SK-N-SH (cell line): ENCODE measurements at regions of chr10 and their contacts with region 1.

Region 1: DNA sequence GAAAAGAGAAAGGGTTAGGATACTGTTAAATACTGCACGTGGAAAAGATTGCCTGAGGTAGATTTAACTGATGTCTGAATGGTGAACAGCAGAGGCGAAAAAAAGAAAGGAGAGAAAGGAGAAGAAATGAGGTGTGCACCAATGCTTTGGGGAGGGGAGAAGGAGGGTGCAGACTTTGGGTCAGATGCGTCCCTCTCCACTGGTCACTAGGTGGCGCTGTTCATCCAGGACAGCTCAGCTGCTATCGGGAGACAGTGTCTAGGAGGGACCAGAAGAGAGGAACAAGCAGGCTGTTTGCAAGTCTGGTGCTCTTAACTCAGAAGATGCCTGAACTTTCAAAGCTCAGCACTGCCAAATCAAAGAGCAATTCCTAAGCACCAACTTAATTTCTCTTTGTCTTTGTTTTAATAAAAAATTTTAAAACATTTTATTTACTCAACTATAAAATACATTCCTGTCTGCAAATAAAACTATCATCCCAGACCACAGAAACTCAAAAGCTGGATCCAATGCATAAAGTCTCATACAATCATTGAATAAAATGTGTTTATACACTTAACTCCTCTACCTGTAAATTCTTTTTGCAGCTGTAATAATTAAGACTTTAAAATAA is 83.9 kb upstream of the PDLIM1 start:
- DNase-seq: peak; percentile 73
- H3K4me3 ChIP-seq: peak overlapping the region in 1 of 2 experiments; percentile 31; a peak in 1 of 4 replicates
- H3K27ac ChIP-seq: no peak overlapping the region
- H3K4me1 ChIP-seq: peaks cover 0 to 8% of the 10 kb centered on the region in 2 experiments; a peak in 2 of 4 replicates
- H3K27me3 ChIP-seq: peaks cover 10% of the 10 kb centered on the region; the same call in 1 of the 2 replicates
- CTCF ChIP-seq: peak; percentile 72
- EP300 ChIP-seq: no peak
- RAD21 ChIP-seq: peak; percentile 96

Region 2: DNA sequence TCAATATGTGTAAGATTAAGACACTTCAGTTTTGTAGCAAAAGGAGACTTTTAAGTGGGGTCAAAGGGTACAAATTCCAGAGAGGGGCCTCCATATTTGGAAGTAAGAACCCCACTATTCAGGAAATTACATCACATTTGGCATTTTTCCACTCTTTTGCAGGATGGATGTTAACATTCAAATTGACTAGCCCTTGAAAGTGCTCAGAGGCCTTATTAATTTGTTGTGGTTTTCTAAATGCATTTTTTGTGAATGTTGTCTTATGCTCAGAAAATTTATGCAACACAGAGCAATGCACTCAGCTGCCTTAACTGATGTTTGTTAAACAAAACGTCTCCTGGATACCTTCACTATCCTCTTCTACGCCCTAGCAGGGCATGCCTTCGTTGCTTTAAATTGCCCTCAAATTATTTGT is 33.0 kb before region 1 on chr10:
- CTCF ChIA-PET with region 1: interaction called, 12 read pairs
- POLR2A ChIA-PET with region 1: no interaction called
- DNase-seq: no peak
- H3K4me3 ChIP-seq: no peak overlapping the region
- H3K27ac ChIP-seq: no peak overlapping the region
- H3K4me1 ChIP-seq: no peaks in the 10 kb centered on the region; a peak in 1 of 4 replicates
- H3K27me3 ChIP-seq: no peaks in the 10 kb centered on the region
- CTCF ChIP-seq: no peak
- EP300 ChIP-seq: 0 out of 4 replicates have a peak, but pooled peaks of 1 of the 2 experiments have one; percentile 19
- RAD21 ChIP-seq: no peak

Region 3: GRCh38 chr10:95406651-95407280 is 32.1 kb after region 1 on chr10:
- CTCF ChIA-PET with region 1: interaction called, 35 read pairs
- POLR2A ChIA-PET with region 1: no interaction called
- DNase-seq: no peak
- H3K4me3 ChIP-seq: no peak overlapping the region
- H3K27ac ChIP-seq: no peak overlapping the region
- H3K4me1 ChIP-seq: peaks cover 0 to 7% of the 10 kb centered on the region in 2 experiments; a peak in 1 of 4 replicates
- H3K27me3 ChIP-seq: no peaks in the 10 kb centered on the region
- CTCF ChIP-seq: no peak
- EP300 ChIP-seq: no peak
- RAD21 ChIP-seq: no peak

Region 4: DNA sequence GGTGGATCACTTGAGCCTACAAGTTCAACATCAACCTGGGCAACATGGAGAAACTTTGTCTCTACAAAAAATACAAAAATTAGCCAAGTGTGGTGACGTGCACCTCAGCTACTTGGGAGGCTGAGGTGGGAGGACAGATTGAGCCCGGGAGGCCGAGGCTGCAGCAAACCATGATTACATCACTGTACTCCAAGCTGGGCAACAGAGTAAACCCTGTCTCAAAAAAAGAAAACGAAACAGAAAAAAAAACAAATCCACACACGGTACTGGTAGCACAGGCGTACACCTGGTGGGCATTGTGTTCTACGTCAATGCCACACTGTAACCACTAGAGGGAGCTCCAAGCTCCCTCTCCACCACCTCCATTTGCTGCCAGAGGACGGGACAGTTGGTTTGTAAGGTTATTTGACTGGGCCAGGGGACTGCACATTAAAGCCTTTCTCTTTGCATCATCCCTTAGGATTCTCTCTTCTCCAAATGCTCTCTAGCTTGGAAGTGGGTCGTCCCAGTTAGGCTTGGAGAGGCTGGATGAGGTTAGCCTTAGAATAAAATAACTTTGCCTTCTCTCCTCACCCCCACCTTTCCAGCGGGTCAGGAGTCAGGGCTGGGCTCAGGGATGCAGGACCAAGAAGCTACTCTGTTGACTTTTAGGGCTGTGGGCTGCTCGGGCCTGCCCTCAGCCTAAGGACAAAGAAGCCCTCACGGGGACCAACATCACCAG is 55.7 kb after region 1 on chr10:
- CTCF ChIA-PET with region 1: interaction called, 88 read pairs
- POLR2A ChIA-PET with region 1: no interaction called
- DNase-seq: peak; percentile 81
- H3K4me3 ChIP-seq: no peak overlapping the region; a peak in 1 of 4 replicates
- H3K27ac ChIP-seq: no peak overlapping the region
- H3K4me1 ChIP-seq: peaks cover 0 to 12% of the 10 kb centered on the region in 2 experiments; a peak in 2 of 4 replicates
- H3K27me3 ChIP-seq: no peaks in the 10 kb centered on the region
- CTCF ChIP-seq: peak; percentile 97
- EP300 ChIP-seq: no peak
- RAD21 ChIP-seq: peak; percentile 95

Region 5: DNA sequence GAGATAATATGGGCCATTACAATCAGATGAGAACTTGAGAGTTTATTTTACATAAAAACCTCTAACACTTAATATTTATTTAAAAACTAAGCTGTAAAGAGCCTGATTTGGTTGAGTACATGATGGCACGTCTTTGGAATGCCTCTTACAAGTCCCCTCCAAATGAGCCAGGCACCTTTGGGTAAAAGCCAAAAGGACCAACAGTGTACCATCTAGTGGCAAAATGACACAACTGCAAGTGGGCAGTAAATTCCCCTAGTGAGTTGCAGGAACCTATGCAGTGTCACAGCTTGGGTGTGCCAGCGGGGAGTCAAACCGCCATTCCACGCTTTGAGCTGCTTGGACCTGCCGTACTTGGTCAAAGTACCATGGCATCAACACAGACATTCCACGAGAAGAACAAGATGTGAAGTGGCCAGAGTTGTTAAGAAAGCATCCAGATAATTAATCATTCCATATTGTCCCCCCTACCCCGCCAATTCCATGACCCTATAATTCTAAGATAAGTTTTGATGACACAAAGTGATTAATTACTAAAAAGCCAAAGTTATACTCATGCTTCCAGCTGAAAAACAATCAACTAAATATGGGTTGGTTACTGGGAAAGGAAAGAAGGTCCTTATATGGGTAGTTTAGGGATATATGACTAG is 71.3 kb after region 1 on chr10:
- CTCF ChIA-PET with region 1: interaction called, 30 read pairs
- POLR2A ChIA-PET with region 1: no interaction called
- DNase-seq: peak; percentile 67
- H3K4me3 ChIP-seq: no peak overlapping the region
- H3K27ac ChIP-seq: 0 out of 4 replicates have a peak overlapping the region, but pooled peaks of 1 of the 2 experiments have one; percentile 16
- H3K4me1 ChIP-seq: peaks cover 4% of the 10 kb centered on the region in 2 experiments; a peak in 2 of 4 replicates
- H3K27me3 ChIP-seq: no peaks in the 10 kb centered on the region
- CTCF ChIP-seq: peak; percentile 81
- EP300 ChIP-seq: no peak
- RAD21 ChIP-seq: peak; percentile 64

Region 6: GRCh38 chr10:95613330-95613729 is 238.6 kb after region 1 on chr10:
- CTCF ChIA-PET with region 1: interaction called, 214 read pairs
- POLR2A ChIA-PET with region 1: no interaction called
- DNase-seq: no peak
- H3K4me3 ChIP-seq: no peak overlapping the region
- H3K27ac ChIP-seq: no peak overlapping the region
- H3K4me1 ChIP-seq: no peaks in the 10 kb centered on the region
- H3K27me3 ChIP-seq: no peaks in the 10 kb centered on the region
- CTCF ChIP-seq: no peak
- EP300 ChIP-seq: no peak
- RAD21 ChIP-seq: no peak